Activated CD4-positive, alpha-beta memory T cell treated with anti-CD3 and anti-CD28 coated beads, Interleukin-2, amount 10 ng/mL, durations not matched to agents 7 days and 5 days (primary cell): ENCODE measurements at regions of chr16 and their contacts with region 1.

Region 1: DNA sequence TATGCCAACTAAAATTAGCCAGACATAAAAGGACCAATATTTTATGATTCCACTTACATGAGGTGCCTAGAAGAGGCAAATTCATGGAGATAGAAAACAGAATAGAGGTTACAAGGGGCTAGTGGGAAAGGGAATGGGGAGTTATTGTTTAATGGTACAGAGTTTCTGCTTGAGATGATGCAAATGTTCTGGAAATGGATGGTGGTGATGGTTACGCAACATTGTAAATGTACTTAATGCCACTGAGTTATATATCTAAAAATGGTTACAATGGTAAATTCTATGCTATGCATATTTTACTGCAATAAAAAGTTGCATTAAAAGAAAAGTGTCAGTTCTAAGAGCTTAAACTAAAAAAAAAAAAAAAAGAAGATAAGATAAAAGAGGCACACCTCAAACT is 17.9 kb downstream of the MT1X start:
- DNase-seq: no peak
- H3K4me3 Mint-ChIP-seq: no peak overlapping the region
- H3K27ac Mint-ChIP-seq: no peak overlapping the region
- H3K4me1 Mint-ChIP-seq: peaks cover 8% of the 10 kb centered on the region
- H3K27me3 Mint-ChIP-seq: peaks cover 4% of the 10 kb centered on the region

Region 2: GRCh38 chr16:56513972-56514371 is 186.2 kb before region 1 on chr16:
- CTCF ChIA-PET with region 1: interaction called, 13 read pairs
- POLR2A ChIA-PET with region 1: interaction called, 4 read pairs
- DNase-seq: peak; percentile 54
- H3K4me3 Mint-ChIP-seq: no peak overlapping the region
- H3K27ac Mint-ChIP-seq: no peak overlapping the region
- H3K4me1 Mint-ChIP-seq: peaks cover 3% of the 10 kb centered on the region
- H3K27me3 Mint-ChIP-seq: no peaks in the 10 kb centered on the region

Region 3: DNA sequence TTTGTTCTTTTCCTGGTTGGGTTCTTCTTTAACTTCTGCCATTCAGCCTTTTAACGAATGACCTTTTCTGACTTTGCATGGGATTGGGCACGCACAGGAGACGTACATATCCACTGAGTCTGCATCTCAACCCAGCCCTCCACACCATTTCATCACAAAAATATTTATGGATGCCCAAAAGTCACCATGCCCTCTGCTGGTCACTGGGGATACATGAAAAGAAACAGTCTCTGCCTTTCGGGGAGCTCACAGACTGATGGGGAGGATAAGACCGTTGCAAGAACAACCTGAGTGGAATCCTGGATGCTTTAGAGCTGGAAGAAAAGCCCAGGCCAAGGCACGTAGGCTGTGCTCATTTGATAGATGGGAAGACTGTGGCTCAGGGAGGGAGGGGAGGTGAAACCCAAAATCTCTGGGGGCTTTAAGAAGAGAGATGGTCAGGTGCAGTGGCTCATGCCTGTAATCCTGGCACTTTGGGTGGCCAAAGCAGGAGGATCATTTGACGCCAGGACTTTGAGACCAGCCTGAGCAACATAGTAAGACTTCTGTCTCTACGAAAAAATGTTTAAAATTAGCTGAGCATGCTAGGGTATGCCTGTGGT is 99.7 kb before region 1 on chr16:
- CTCF ChIA-PET with region 1: interaction called, 21 read pairs
- POLR2A ChIA-PET with region 1: interaction called, 3 read pairs
- DNase-seq: peak; percentile 42
- H3K4me3 Mint-ChIP-seq: no peak overlapping the region
- H3K27ac Mint-ChIP-seq: no peak overlapping the region
- H3K4me1 Mint-ChIP-seq: peaks cover 8% of the 10 kb centered on the region
- H3K27me3 Mint-ChIP-seq: peaks cover 33% of the 10 kb centered on the region

Region 4: GRCh38 chr16:56625140-56625942 is 74.9 kb before region 1 on chr16 and contains the start of gene MT1E:
- CTCF ChIA-PET with region 1: interaction called, 19 read pairs
- POLR2A ChIA-PET with region 1: no interaction called
- DNase-seq: peak; percentile 61
- H3K4me3 Mint-ChIP-seq: peak within 1 kb of the TSS; percentile 80
- H3K27ac Mint-ChIP-seq: peak within 1 kb of the TSS; percentile 58
- H3K4me1 Mint-ChIP-seq: peaks cover 14% of the 10 kb centered on the region
- H3K27me3 Mint-ChIP-seq: peaks cover 43% of the 10 kb centered on the region
- total RNA-seq, gene MT1E: 10.4 to 12.3 TPM

Region 5: GRCh38 chr16:56675685-56676210 is 24.4 kb before region 1 on chr16:
- CTCF ChIA-PET with region 1: interaction called, 12 read pairs
- POLR2A ChIA-PET with region 1: interaction called, 8 read pairs
- DNase-seq: peak; percentile 60
- H3K4me3 Mint-ChIP-seq: peak overlapping the region; percentile 44
- H3K27ac Mint-ChIP-seq: no peak overlapping the region
- H3K4me1 Mint-ChIP-seq: peaks cover 21% of the 10 kb centered on the region
- H3K27me3 Mint-ChIP-seq: peaks cover 46% of the 10 kb centered on the region

Region 6: GRCh38 chr16:56715120-56715519 is 14.9 kb after region 1 on chr16:
- CTCF ChIA-PET with region 1: interaction called, 18 read pairs
- POLR2A ChIA-PET with region 1: no interaction called
- DNase-seq: no peak
- H3K4me3 Mint-ChIP-seq: no peak overlapping the region
- H3K27ac Mint-ChIP-seq: no peak overlapping the region
- H3K4me1 Mint-ChIP-seq: no peaks in the 10 kb centered on the region
- H3K27me3 Mint-ChIP-seq: peaks cover 4% of the 10 kb centered on the region

Region 7: GRCh38 chr16:56950881-56951771 is 250.9 kb after region 1 on chr16:
- CTCF ChIA-PET with region 1: interaction called, 10 read pairs
- POLR2A ChIA-PET with region 1: no interaction called
- DNase-seq: peak; percentile 66
- H3K4me3 Mint-ChIP-seq: no peak overlapping the region
- H3K27ac Mint-ChIP-seq: no peak overlapping the region
- H3K4me1 Mint-ChIP-seq: peaks cover 20% of the 10 kb centered on the region
- H3K27me3 Mint-ChIP-seq: no peaks in the 10 kb centered on the region